BJ (cell line): ENCODE measurements at regions of chr12 and their contacts with region 1.

Region 1: GRCh38 chr12:6230321-6231110 is 30.3 kb downstream of the CD9 start:
- DNase-seq: no peak
- H3K4me3 ChIP-seq: no peak overlapping the region
- H3K27me3 ChIP-seq: no peaks in the 10 kb centered on the region
- CTCF ChIP-seq: no peak

Region 2: DNA sequence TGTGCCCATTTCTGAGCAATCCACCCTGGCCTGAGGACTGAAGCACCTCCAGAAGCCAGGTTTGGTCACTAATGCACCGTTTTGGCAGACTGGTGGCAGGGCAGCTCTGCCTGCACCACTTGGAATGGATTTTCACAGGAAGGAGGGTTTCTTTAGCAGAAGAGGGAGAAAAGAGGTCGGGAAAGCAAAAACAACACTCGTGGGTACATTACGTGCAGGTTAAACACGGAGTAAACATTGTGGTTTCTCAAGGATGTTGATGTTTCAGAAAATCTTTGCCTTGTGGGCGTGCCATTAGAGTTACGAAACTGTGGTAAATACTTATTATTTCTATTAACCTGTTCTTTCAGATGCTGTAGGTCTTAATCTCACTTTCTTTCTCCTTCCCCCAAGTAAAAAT is 1116.0 kb before region 1 on chr12:
- CTCF ChIA-PET with region 1: no interaction called
- POLR2A ChIA-PET with region 1: interaction called, 14 read pairs
- DNase-seq: no peak
- H3K4me3 ChIP-seq: no peak overlapping the region
- H3K27me3 ChIP-seq: no peaks in the 10 kb centered on the region
- CTCF ChIP-seq: no peak

Region 3: DNA sequence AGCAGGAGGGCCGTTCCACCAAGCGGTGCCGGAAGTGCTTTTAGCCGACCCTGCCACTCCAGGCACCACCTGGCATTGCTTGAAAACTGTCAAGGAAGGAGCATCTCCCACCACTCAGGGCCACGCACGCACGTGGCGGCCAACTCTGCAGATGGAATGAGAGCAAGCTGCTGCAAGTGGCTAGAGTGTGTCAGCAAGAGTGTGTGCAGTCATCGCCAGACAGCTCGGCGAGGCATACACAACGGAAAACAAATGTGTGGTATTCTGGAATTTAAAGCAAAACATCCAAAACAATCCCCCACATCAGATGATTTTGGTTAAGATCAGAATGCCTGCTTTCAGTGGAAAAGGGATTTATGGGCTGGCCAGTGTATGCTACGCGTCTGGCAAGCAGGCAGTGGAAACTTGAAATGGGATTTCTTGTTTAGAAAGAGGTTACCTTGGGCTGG is 19.1 kb before region 1 on chr12:
- CTCF ChIA-PET with region 1: interaction called, 10 read pairs
- POLR2A ChIA-PET with region 1: no interaction called
- DNase-seq: peak; percentile 88
- H3K4me3 ChIP-seq: no peak overlapping the region
- H3K27me3 ChIP-seq: no peaks in the 10 kb centered on the region
- CTCF ChIP-seq: no peak

Region 4: DNA sequence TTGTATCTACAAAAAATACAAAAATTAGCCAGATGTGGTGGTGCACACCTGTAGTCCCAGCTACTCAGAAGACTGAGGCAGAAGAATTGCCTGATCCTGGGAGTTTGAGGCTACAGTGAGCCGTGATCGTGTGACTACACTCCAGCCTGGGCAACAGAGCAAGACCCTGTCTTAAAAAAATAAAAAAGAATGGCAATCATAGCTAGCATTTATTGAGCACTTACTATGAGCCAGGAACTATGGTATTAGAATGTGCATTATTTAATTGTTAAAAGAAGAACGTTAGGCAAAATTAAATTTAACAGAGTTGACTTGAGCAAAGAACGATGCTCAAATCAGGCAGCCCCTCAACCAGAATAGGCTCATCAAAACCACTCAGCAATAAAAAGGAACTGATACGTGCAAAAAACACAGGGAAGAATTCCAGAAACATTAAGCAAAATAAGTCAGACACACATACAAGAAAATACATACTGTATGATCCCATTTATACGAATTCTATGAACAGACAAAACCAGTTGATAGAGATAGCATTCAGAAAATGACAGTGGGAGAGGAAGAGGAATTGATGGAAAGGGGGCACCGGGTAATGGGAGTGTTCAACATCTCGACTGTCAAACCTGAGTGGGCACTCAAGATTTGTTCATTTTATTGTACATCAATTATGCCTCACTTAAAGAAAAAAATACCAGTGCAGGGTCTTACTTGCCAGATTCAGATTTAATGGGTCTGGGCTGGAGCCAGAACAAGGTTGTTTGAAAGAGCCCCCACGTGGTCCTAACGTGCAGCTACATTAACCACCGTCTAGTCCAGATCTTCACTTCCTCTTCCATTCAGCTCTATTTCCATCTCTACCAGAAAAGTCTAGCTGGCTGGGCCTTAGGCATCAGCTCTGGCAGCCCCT is 136.8 kb after region 1 on chr12:
- CTCF ChIA-PET with region 1: no interaction called
- POLR2A ChIA-PET with region 1: no interaction called
- DNase-seq: no peak
- H3K4me3 ChIP-seq: no peak overlapping the region
- H3K27me3 ChIP-seq: no peaks in the 10 kb centered on the region
- CTCF ChIP-seq: peak; percentile 26; the same call in 1 of the 2 replicates